RWPE1 (cell line): ENCODE measurements at regions of chr1 and their contacts with region 1.

Region 1: GRCh38 chr1:205658943-205659581 is 21.2 kb downstream of the SLC45A3 start:
- DNase-seq: peak; percentile 91
- H3K27ac ChIP-seq: no peak overlapping the region
- CTCF ChIP-seq: peak; percentile 88

Region 2: DNA sequence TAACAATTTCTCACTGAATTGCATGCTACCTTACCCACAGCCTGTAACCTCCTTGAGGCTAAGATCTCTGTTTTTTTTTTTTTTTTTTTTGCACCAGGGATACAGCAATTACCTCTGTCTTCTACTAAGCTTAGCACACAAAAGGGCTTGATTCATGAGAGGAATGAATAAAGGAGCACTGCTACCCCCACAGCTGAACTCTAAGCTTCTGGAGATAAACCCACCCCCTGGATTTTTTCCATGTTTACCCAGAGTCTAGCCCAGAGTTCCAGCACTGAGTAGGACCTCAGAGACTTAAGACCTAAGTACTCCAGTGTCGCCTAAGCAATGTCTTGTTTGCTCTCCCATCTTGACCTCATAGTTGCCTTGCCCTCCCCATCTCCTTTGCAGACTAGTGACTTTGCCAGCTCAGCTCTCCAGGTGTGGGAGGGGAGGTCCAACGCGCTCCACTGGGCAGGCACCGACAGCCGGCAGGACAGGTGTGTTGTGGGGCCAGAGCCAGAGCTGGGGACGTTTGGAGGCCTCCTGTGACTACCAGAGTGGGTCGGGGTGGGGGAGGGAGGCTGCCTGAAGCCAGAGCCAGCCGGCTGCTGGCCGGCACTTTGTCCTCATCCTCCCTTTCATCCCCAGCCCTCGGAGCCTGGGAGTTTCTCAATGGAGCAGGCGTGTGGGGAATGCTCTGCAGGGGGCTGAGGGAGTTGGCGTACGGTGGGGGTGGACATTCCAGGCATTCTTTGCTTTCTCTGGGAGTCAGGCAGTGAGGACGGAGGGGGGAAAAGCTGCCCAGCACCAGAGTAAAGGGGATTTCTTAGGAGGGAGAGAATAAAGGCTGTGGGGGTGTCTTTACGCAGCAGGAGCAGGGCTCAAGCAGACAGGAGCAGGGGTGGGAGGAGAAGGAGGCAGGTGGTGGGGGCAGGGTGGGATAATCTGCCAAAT is 357.9 kb before region 1 on chr1:
- CTCF ChIA-PET with region 1: interaction called, 12 read pairs
- POLR2A ChIA-PET with region 1: no interaction called
- DNase-seq: peak; percentile 84
- H3K27ac ChIP-seq: peak overlapping the region; percentile 85
- CTCF ChIP-seq: no peak

Region 3: DNA sequence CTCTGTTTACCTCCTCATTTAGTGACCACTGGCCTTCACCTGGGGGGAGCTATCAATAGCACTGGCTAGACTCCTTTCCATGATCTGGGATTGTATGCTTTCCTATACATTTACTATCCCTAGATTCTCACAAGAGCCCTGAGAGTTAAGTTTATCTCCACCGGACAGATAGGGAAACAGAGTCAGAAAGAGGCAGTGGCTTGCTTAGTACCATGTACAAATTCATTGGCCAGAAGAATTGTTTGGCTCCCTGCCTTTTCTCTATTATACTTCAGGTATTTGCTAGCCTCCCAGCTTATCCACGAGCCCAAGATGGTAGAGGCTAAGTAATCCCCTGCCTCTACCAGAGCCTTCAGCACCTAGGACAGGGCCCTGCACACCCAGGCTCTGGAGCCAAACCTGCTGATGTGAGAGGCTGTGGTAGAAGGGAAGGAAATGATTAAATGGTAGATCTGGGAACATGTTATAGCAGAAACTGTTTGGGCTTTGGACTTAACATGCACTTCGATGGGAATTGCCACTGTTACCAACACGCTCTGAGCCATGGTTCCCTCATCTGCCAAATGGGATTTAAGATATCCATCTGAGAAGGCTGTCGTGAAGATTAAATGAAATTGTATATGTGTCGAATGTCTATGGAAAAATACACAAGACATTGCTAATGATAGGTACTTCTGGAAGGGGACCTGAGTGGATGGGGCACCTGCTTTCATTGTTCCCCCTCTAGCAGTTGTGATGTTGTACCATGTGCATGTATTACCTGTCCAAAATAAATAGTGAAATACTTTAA is 200.1 kb before region 1 on chr1:
- CTCF ChIA-PET with region 1: no interaction called
- POLR2A ChIA-PET with region 1: no interaction called
- DNase-seq: no peak
- H3K27ac ChIP-seq: no peak overlapping the region
- CTCF ChIP-seq: no peak

Region 4: GRCh38 chr1:205528887-205529825 is 129.9 kb before region 1 on chr1:
- CTCF ChIA-PET with region 1: interaction called, 75 read pairs
- POLR2A ChIA-PET with region 1: interaction called, 6 read pairs
- DNase-seq: peak; percentile 89
- H3K27ac ChIP-seq: no peak overlapping the region
- CTCF ChIP-seq: peak; percentile 93

Region 5: DNA sequence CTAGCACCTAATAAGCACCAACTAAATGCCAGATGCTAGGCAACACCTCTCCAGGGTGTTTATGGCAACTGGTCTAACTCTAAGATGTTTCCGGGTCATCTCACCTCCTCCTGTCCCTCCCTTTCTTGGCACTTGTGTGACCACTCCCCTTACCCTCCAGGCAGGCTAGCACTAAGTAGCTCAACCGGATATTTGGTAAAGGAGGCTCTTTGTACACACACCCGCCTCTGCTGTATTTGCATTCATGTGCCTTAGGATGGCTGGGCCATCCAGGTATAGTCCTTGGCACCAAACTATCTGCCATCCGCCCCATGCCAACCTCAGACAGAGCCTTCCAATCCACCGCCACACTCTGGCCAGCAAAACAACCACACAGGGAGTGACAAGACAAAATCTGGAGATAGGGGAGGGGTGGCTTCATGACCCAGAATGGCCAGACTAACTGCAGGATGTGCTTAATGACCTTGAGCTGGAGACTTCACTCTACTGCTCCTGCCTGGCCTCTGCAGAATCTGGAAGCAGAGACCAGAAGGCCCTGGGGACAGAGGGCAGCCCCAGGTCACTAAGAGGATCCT is 95.1 kb before region 1 on chr1:
- CTCF ChIA-PET with region 1: no interaction called
- POLR2A ChIA-PET with region 1: no interaction called
- DNase-seq: no peak
- H3K27ac ChIP-seq: no peak overlapping the region
- CTCF ChIP-seq: no peak

Region 6: DNA sequence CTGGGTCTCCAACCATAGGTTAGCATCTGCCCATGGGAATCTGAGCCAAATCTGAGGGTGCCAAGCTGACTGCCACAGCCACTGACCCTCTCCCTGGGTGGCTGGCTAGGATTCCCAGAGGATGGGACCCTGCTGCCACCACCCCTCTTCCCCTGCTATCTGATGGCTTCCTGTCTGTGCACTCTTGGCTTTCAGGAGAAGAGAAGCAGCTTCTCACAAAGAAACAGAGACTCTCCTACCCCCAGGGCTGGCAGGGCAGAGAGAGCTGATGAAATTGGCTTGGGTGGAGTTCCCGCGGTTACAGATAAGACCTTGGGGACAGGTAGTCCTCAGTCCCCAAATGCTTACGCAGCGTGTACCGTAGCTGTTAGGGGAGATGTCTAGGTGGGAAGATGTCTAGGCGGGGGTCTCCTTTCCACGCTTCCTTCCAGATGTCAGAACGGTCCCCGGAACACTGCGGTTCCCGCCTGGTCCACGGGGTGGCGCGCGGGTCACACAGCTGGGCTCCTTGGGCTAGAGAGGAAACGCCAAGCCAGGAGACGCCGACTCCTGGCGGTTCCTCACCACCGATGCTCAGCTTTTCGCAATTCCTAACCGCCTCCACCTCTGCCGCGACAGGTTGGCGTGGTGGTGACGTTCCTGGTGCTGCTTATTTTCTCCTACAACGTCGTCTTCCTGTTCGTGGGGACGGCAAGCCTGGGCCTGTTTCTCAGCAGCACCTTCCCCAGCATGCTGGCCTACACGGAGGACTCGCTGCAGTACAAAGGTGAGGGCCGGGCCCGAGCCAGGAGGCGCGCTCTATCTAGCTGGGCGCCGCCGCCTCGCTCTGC is 67.3 kb before region 1 on chr1:
- CTCF ChIA-PET with region 1: interaction called, 472 read pairs
- POLR2A ChIA-PET with region 1: interaction called, 29 read pairs
- DNase-seq: peak; percentile 98
- H3K27ac ChIP-seq: peak overlapping the region; percentile 79
- CTCF ChIP-seq: peak; percentile 98

Region 7: DNA sequence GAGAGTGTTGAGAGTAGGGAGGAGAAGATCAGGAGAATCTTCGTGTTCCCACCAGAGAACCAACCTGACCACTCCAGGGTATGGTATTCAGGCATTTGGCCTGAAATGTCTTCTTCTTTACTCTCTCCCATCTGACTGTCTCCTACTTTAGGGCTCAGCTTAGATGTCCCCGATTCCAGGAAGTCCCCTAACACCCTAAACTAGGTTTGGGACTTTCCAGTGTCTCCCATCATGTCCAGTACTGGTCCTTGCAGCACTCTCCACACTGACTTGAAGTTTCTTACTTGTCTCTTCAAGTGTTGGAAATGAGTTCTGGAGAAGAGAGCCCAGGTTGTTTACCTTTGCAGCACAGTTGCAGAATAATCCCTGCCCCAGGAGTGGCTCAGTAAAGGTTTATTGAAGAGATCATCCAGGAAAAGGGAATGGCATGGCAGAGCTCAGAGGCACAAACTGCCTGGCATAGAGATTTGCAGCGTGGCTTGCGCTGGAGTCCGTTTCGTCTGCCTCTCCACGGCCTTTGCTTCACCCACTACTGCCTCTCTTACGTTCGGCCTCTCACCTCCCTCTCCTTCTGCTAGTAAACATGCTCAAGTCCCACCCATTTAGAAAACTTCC is 21.1 kb before region 1 on chr1:
- CTCF ChIA-PET with region 1: interaction called, 48 read pairs
- POLR2A ChIA-PET with region 1: no interaction called
- DNase-seq: no peak
- H3K27ac ChIP-seq: no peak overlapping the region
- CTCF ChIP-seq: no peak

Region 8: GRCh38 chr1:205689479-205689878 is 30.4 kb after region 1 on chr1:
- CTCF ChIA-PET with region 1: interaction called, 22 read pairs
- POLR2A ChIA-PET with region 1: no interaction called
- DNase-seq: no peak
- H3K27ac ChIP-seq: no peak overlapping the region
- CTCF ChIP-seq: no peak

Region 9: DNA sequence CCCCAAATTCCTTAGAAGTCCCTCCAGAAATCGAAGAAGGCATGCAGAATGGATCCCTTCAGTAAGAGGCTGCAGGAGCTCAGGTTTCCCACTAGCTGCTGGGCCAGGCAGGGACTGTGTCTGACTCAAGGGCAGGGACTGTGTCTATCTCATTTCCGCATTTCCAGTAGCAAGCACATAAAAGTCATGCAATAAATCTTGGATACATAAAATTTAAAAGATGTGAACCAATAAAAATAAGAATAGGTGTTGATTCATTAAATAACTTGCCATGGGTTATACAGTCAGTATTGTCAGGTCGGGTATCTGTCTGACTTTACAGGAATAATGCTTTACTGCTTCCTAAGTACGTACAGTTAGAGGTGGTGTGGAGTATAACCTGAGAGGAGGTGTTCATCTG is 175.7 kb after region 1 on chr1:
- CTCF ChIA-PET with region 1: no interaction called
- POLR2A ChIA-PET with region 1: no interaction called
- DNase-seq: no peak
- H3K27ac ChIP-seq: no peak overlapping the region
- CTCF ChIP-seq: no peak

Region 10: DNA sequence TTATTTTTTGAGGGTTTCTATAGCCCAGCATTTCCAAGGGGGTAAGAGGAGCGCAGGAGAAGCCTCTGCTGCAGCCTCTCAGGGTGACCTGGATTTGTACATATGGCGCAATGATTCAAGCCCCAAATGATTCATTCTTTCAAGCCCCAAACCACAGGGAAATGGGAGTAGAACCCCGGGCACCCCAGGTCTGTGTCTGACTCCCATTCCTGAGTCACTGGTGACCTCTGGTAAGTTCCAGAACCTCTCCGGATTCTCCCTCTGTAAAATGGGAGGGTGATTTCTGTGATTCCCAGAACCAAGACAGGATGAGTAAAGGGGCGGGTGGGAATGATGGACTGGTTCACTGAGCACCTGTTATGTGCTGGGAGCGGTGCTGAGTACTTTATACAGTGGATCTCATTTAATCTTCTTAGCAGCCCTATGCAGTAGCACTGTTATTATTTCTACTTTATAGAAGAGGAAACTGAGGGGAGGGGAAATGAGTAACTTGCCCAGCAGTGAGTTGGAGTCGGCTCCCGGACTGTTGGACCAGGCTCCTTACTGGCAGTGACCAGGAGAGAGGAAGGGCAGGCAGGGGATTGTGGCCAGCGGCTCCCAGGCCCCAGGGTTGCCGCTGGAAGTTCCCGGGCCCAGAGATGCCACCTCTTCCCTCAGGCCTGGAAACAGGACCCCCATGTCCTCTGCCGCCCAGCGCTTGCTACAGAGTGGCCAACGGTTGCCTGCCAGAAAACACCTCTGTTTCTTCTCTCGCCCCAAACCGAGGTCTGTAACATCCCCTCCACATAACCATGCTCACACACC is 304.5 kb after region 1 on chr1:
- CTCF ChIA-PET with region 1: no interaction called
- POLR2A ChIA-PET with region 1: no interaction called
- DNase-seq: peak; percentile 78
- H3K27ac ChIP-seq: peak overlapping the region; percentile 87
- CTCF ChIP-seq: no peak

Region 11: GRCh38 chr1:205977402-205978014 is 318.4 kb after region 1 on chr1:
- CTCF ChIA-PET with region 1: interaction called, 18 read pairs
- POLR2A ChIA-PET with region 1: no interaction called
- DNase-seq: peak; percentile 73
- H3K27ac ChIP-seq: peak overlapping the region; percentile 76
- CTCF ChIP-seq: peak; percentile 94